CD14-positive monocyte (primary cell): ENCODE measurements at regions of chr13 and their contacts with region 1.

Region 1: DNA sequence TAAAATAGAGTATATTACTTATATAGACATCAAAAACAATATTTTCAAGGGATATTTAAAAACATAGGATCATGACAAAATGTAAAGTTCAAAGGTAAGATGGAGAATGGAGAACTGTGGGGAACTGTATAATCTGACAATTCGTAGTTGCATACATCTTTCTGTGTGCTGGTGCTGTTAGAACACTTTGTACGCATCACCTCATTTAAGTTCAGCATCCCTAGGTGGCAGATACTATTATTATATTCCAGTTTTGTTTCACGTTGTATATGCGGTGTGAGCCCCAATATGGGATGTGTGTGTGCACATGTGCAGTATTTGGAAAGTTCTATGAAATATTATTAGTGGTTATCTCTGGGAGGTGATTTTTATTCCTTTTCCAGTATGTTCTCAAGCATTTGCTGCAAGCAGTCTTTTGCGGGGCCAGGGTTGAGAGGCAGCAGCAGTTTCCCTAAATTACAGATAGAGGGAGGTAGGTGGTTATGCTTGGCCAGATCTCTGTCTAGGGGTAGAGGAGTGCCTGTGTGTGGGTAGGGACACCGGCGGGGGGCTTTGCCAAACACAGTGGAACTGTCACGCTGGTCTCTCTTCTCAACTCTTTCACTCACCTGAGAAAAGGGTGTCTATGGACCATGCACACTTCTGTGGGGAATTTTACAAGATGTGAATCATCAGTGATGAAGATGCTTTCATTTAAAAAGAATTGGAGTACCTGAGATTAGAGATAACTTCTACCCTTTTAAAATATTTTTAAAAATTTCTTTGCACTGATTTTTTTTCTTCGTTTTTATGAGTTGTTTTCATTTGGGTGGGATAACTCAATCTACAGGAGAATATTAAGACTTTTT is 55.6 kb upstream of the ALOX5AP start:
- DNase-seq: peak in 2 of 3 donors; percentile 42 to 47
- H3K4me3 ChIP-seq: no peak overlapping the region
- H3K4me3 Mint-ChIP-seq: peak overlapping the region; percentile 35 to 48
- H3K27ac ChIP-seq: no peak overlapping the region
- H3K27ac Mint-ChIP-seq: peak overlapping the region in 1 of 7 donors; percentile 6
- H3K4me1 ChIP-seq: peaks cover 28 to 31% of the 10 kb centered on the region in 2 donors
- H3K4me1 Mint-ChIP-seq: peaks cover 30% of the 10 kb centered on the region
- H3K27me3 ChIP-seq: peaks cover 0 to 2% of the 10 kb centered on the region in 2 donors
- H3K27me3 Mint-ChIP-seq: peaks cover 2 to 5% (median 2%) of the 10 kb centered on the region in 3 donors
- CTCF ChIP-seq: peak; percentile 75

Region 2: DNA sequence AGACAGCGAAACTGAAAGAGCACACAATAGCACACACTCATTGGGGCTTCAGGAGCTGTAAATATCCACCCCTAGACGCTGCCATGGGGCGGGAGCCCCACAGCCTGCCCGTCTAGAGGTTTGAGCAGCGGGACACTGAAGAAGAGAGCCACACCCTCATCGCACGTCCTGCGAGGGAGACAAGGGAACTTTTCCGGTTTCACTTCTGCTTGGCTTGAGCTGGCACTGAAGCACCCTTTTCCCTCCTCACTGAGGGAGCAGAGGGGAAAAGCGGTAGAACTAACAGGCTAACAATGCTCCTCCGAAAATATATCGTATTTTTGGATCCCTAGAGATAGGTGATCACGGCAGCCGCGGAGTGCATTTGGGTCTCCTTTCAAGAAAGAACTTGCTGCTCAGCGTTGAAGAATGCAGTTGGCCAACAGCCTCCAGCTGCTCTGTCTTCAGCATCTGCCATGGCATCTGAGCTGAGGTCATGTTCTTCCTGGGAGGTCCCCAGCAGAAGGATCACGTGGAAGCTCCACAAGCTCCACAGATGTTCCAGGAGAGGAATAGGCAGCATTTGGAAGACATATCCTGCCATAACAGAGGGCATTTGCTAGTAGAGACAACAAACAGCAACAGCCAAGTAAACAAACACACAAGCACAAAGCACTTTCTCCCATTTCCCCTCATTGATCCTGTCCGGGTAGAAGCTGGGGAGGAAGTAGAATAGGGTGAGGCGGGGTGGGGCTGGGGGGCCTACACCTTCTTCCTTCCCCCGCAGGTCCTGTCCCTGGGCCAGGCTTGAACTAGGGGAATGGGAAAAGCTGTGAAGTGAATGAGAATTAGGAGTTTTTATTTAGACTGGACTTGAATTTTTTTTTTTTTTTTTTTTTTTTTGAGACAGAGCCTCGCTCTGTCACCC is 10.8 kb after region 1 on chr13:
- intact Hi-C with region 1: loop called in 1 of 2 experiments (anchors 2 kb)
- DNase-seq: peak; percentile 89 to 91 (median 90)
- H3K4me3 ChIP-seq: peak overlapping the region; percentile 16 to 66 (median 17)
- H3K4me3 Mint-ChIP-seq: peak overlapping the region; percentile 73 to 87
- H3K27ac ChIP-seq: peak overlapping the region; percentile 64 to 86
- H3K27ac Mint-ChIP-seq: peak overlapping the region; percentile 90 to 97 (median 94)
- H3K4me1 ChIP-seq: peaks cover 32 to 40% of the 10 kb centered on the region in 2 donors
- H3K4me1 Mint-ChIP-seq: peaks cover 39% of the 10 kb centered on the region
- H3K27me3 ChIP-seq: no peaks in the 10 kb centered on the region
- H3K27me3 Mint-ChIP-seq: peaks cover 0 to 6% (median 5%) of the 10 kb centered on the region in 3 donors
- CTCF ChIP-seq: no peak

Region 3: GRCh38 chr13:30712536-30713532 is 33.1 kb after region 1 on chr13:
- intact Hi-C with region 1: loop called (anchors 5 kb)
- DNase-seq: peak; percentile 98 to 99 (median 99)
- H3K4me3 ChIP-seq: peak overlapping the region in 1 of 3 experiments; percentile 33
- H3K4me3 Mint-ChIP-seq: peak overlapping the region; percentile 72 to 85
- H3K27ac ChIP-seq: peak overlapping the region; percentile 62 to 91
- H3K27ac Mint-ChIP-seq: peak overlapping the region; percentile 91 to 100 (median 99)
- H3K4me1 ChIP-seq: peaks cover 56 to 66% of the 10 kb centered on the region in 2 donors
- H3K4me1 Mint-ChIP-seq: peaks cover 68% of the 10 kb centered on the region
- H3K27me3 ChIP-seq: peaks cover 13 to 22% of the 10 kb centered on the region in 2 donors
- H3K27me3 Mint-ChIP-seq: peaks cover 24 to 26% (median 25%) of the 10 kb centered on the region in 3 donors
- CTCF ChIP-seq: no peak